ENCODE measurements at regions of chr2 and their contacts with region 1.

Region 1: GRCh38 chr2:85551698-85552678 is 9.3 kb downstream of the GGCX start:
- DNase-seq: peak; percentile 92
- ATAC-seq: peak; percentile 83
- H3K4me3 Mint-ChIP-seq: no peak overlapping the region
- H3K27ac Mint-ChIP-seq: peak overlapping the region; percentile 0
- H3K4me1 Mint-ChIP-seq: no peaks in the 10 kb centered on the region
- H3K27me3 Mint-ChIP-seq: no peaks in the 10 kb centered on the region

Region 2: DNA sequence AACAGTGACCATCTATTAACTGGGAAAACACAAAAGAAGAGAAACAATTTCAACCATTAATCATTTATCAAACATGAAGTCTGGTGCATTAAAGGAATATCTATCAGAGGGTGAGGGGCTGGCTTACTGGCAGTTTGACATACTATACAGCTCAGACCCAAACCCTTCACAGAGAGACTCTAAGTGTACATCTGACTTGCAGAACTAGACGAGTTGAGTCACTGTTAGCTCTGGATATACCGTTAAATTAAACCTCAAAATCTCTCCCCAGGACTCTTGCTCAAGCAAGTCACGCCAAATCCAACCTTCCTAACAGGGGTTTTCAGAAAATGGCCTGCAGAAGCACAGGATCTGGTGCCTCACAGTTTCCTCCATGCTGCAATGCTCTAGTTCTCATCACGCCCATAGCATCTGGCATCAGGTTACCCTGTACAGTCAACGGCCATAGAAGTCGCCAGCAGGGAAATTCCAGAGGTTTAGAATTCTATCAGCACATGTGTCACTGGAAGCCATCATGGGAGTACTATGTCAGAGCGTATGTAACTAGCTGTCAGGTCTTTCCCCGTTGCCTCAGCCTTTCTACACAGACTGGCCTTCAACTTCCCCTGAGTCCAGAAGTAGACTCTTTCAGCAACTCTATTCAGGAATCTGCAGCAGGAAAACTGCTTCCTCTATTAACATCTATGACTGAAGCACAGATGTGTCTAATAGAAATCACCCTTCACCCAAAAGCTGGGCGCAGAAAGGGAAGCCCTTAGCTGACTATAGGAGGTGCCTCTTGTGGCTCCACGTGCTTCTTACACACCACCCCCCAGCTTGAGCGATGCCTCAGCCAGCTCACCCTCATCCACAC is 233.5 kb before region 1 on chr2:
- CTCF ChIA-PET with region 1: interaction called, 13 read pairs
- DNase-seq: no peak
- ATAC-seq: peak; percentile 35
- H3K4me3 Mint-ChIP-seq: peak overlapping the region; percentile 16
- H3K27ac Mint-ChIP-seq: peak overlapping the region; percentile 51
- H3K4me1 Mint-ChIP-seq: peaks cover 55% of the 10 kb centered on the region
- H3K27me3 Mint-ChIP-seq: no peaks in the 10 kb centered on the region

Region 3: DNA sequence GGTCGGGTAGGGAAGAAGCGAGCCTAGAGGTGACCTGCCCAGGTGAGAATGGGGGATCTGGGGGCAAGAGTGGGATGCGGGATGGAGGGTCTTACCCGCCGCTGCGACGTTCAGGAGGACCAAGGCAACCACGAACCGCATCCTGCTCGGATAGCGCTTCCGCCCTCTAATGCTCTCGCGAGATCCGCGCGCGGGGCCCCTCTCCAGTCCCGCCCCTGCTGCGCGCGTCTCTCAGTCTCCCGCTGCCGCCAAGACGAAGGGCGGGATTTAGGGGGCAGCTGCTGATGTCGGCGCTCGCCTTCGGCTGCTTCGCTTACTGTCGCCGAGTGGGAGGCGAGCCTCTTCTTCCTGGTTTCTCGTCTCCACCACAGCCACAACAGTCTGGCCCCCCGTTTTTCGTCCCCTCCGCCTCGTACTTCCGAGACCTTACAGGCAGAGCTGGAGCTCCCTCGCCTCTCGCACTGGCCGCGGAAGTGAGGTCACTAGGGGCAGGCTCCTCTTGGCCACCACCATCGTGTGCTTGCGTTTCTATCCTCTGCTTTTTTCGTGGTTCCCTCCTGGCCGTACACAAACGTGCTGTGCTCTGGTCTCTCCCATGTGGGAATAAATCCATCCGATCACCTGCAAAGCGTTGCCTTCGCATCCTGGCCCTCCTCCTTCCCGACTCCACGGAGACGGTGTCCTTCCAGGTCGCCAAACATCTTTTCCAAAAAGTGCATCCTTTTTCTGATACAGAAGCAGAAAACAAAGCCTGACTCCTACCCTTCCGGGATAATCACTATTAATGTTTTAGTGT is 224.0 kb before region 1 on chr2 and contains the start of gene TGOLN2:
- CTCF ChIA-PET with region 1: interaction called, 10 read pairs
- DNase-seq: peak; percentile 96
- ATAC-seq: peak; percentile 89
- H3K4me3 Mint-ChIP-seq: peak within 1 kb of the TSS; percentile 92
- H3K27ac Mint-ChIP-seq: peak within 1 kb of the TSS; percentile 100
- H3K4me1 Mint-ChIP-seq: peaks cover 46% of the 10 kb centered on the region
- H3K27me3 Mint-ChIP-seq: no peaks in the 10 kb centered on the region
- total RNA-seq, gene TGOLN2: 109 to 116 TPM

Region 4: DNA sequence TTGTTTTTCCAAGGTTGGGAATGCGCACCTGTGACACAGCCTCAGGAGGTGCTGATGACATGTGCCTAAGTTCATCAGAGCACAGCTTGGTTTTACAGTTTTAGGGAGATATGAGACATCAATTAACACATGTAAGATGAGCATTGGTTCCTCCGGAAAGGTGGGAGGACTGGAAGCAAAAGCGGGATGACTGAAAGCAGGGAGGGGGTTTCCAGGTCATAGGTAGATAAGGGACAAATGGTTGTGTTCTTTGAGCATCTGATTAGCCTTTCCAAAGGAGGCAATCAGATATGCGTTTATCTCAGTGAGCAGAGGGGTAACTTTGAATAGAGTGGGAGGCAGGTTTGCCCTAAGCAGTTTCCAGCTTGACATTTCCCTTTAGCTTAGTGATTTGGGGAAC is 168.1 kb before region 1 on chr2:
- CTCF ChIA-PET with region 1: interaction called, 14 read pairs
- DNase-seq: no peak
- ATAC-seq: no peak
- H3K4me3 Mint-ChIP-seq: no peak overlapping the region
- H3K27ac Mint-ChIP-seq: no peak overlapping the region
- H3K4me1 Mint-ChIP-seq: no peaks in the 10 kb centered on the region
- H3K27me3 Mint-ChIP-seq: no peaks in the 10 kb centered on the region

Region 5: GRCh38 chr2:85390941-85391669 is 160.9 kb before region 1 on chr2:
- CTCF ChIA-PET with region 1: interaction called, 37 read pairs
- DNase-seq: peak; percentile 79
- ATAC-seq: peak; percentile 81
- H3K4me3 Mint-ChIP-seq: no peak overlapping the region
- H3K27ac Mint-ChIP-seq: no peak overlapping the region
- H3K4me1 Mint-ChIP-seq: peaks cover 10% of the 10 kb centered on the region
- H3K27me3 Mint-ChIP-seq: no peaks in the 10 kb centered on the region

Region 6: GRCh38 chr2:85538486-85539360 is 13.3 kb before region 1 on chr2 and contains the start of gene MAT2A:
- CTCF ChIA-PET with region 1: interaction called, 79 read pairs
- DNase-seq: peak; percentile 90
- ATAC-seq: peak; percentile 79
- H3K4me3 Mint-ChIP-seq: peak within 1 kb of the TSS; percentile 96
- H3K27ac Mint-ChIP-seq: peak within 1 kb of the TSS; percentile 97
- H3K4me1 Mint-ChIP-seq: peaks cover 43% of the 10 kb centered on the region
- H3K27me3 Mint-ChIP-seq: no peaks in the 10 kb centered on the region
- total RNA-seq, gene MAT2A: 271 to 336 TPM